ENCODE measurements at regions of chr16 and their contacts with region 1.

Region 1: DNA sequence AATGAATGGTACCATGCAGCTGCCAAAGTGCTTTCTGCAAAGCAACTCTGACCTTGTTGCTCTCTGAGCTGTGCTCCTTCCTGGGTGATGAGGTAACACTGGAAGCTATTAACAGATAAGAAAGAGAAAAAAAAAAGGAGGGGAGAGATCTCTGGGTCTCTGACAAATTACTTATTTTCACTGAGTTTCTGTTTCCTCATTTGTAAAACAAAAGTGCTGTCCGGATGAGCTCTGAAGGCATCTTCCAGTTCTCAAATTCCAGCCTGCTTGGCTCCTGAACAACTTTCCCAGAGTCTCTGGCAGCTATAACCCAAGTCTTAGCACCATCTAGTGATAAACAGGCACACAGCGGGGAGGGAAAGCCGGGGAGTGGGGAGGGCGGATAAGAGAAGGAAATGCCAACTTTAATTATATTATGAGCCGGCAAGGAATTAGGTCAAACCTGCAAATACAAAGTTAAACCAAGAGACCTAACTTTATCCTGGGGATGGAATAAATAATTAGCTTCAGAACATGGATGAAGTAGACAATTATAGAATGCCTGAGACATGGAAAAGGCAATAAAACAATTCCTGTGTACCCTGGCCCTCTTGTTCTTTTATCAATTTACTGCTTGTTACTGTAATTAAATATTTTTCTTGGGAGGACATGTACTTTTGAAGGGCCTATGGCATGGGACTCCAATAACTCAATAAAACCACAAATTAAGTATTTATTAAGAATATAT is 61.3 kb upstream of the KIFC3 start:
- DNase-seq: peak; percentile 38 to 64
- ATAC-seq: peak; percentile 99 to 100
- H3K4me3 ChIP-seq: no peak overlapping the region
- H3K27ac ChIP-seq: no peak overlapping the region
- H3K4me1 ChIP-seq: peaks cover 0 to 8% of the 10 kb centered on the region in 2 donors
- H3K27me3 ChIP-seq: no peaks in the 10 kb centered on the region
- CTCF ChIP-seq: peak; percentile 31 to 75 (median 64)
- POLR2A ChIP-seq: no peak

Region 2: GRCh38 chr16:57591086-57591869 is 272.3 kb before region 1 on chr16:
- in situ Hi-C with region 1: loop called in 1 of 4 experiments (anchors 25 kb)
- intact Hi-C with region 1: no loop called
- DNase-seq: no peak
- ATAC-seq: peak; percentile 45 to 64
- H3K4me3 ChIP-seq: no peak overlapping the region
- H3K27ac ChIP-seq: no peak overlapping the region
- H3K4me1 ChIP-seq: no peaks in the 10 kb centered on the region
- H3K27me3 ChIP-seq: peaks cover 0 to 4% (median 0%) of the 10 kb centered on the region in 3 donors
- CTCF ChIP-seq: peak; percentile 26 to 77 (median 66)
- POLR2A ChIP-seq: no peak

Region 3: GRCh38 chr16:57757326-57757786 is 106.2 kb before region 1 on chr16:
- in situ Hi-C with region 1: no loop called
- intact Hi-C with region 1: loop called (anchors 1 kb)
- DNase-seq: peak; percentile 65 to 76
- ATAC-seq: peak; percentile 89 to 96
- H3K4me3 ChIP-seq: no peak overlapping the region
- H3K27ac ChIP-seq: peak overlapping the region in 2 of 4 donors; percentile 13 to 46
- H3K4me1 ChIP-seq: no peaks in the 10 kb centered on the region
- H3K27me3 ChIP-seq: no peaks in the 10 kb centered on the region
- CTCF ChIP-seq: peak; percentile 89 to 98 (median 93)
- POLR2A ChIP-seq: no peak

Region 4: DNA sequence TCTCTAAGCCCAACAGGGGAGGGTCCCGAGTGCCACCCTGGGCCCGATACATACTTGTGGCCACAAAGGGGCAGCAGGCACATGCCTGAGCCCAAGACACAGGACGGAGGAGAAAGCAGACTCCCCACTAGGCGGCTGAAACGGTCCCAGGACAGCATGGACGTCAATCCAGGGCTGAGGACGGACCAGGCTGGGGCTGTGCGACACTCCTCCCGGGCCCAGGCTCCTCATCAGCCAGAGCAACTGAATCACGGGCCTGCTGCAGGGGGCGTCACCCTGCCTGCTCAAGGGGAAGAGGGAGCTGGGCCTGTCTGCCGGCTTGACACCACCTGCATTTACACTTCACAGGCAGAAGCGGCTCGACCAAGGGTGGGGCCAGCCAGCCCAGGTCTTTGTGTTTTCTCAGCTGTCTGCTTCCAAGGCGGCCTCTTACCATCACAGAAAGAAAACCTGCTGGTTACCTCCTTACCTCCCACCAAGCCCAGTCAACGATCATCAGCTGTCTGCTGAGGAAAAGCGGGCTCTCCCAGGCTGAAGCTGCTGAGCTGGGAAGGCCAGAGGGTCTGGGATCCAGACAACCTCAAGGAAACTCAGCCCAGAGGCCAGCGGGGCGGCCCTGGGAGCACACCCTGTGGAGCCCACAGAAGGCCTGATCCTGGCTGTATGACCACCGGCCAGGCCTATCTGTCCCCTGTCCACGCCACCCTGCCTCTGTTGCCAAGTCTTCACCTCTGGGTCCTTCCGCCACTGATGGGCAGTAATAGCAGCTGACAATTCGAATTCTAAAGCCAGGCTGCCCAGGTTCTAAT is 87.7 kb before region 1 on chr16:
- in situ Hi-C with region 1: loop called (anchors 5 to 10 kb)
- intact Hi-C with region 1: loop called (anchors 1 kb)
- DNase-seq: peak; percentile 51 to 73
- ATAC-seq: peak; percentile 96 to 97
- H3K4me3 ChIP-seq: no peak overlapping the region
- H3K27ac ChIP-seq: no peak overlapping the region
- H3K4me1 ChIP-seq: peaks cover 0 to 3% of the 10 kb centered on the region in 2 donors
- H3K27me3 ChIP-seq: no peaks in the 10 kb centered on the region
- CTCF ChIP-seq: peak; percentile 75 to 85 (median 76)
- POLR2A ChIP-seq: no peak

Region 5: DNA sequence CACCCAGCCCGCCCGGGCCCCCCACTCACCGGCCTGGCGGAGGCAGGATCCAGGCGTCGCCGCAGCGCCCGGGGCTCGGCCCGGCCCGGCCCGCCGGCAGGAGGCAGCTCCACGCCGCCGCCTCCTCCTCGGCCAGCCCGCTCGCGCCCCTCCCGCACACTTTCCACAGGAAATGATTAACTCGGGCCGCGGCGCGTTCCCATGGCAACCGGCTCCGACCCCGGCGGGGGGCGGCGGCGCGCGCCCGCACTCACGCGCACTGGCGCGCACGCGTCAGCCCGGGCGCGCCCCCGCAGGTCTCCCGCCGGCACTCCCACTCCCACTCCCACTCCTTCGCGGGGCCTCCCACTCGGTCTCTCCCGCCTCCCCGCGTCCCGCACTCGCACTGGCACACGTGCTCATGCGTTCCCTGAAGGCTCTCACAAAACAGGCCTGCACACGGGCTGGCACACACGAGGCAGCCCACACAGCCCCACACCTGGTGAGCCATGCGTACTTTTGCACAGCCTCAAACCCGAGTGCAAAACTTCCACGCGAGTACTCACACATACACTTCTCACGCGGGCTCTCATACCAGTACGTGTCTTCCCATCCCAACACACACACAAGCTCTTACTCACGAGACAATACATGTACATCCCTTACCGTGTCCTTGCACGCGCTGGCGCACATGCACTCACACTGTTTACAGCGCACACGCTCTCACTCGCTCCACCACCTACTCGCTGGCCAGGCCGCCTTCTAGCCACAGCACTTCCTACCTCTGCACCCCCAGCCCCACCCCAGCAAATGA is 61.1 kb before region 1 on chr16 and contains the start of gene KIFC3:
- in situ Hi-C with region 1: no loop called
- intact Hi-C with region 1: loop called (anchors 2 kb)
- DNase-seq: peak in 1 of 2 donors; percentile 31
- ATAC-seq: peak; percentile 19 to 37
- H3K4me3 ChIP-seq: peak within 1 kb of the TSS; percentile 52 to 58 (median 54)
- H3K27ac ChIP-seq: peak within 1 kb of the TSS; percentile 64 to 77 (median 66)
- H3K4me1 ChIP-seq: peaks cover 52 to 59% of the 10 kb centered on the region in 2 donors
- H3K27me3 ChIP-seq: no peaks in the 10 kb centered on the region
- CTCF ChIP-seq: peak in 4 of 5 experiments; percentile 6 to 50 (median 28)
- POLR2A ChIP-seq: peak; percentile 5 to 6
- total RNA-seq, gene KIFC3: 2.1 to 12.0 (median 3.2) TPM